Heart left ventricle (tissue), 16 donors: ENCODE measurements at regions of chr1 and their contacts with region 1.

Region 1: GRCh38 chr1:160193091-160193819 is 2.9 kb downstream of the CASQ1 start:
- DNase-seq: peak; percentile 85 to 90 (median 88)
- ATAC-seq: peak; percentile 82 to 90 (median 84)
- H3K4me3 ChIP-seq: no peak overlapping the region
- H3K27ac ChIP-seq: peak overlapping the region in 11 of 12 donors; percentile 34 to 86 (median 72)
- H3K4me1 ChIP-seq: peaks cover 0 to 42% (median 21%) of the 10 kb centered on the region in 12 donors
- H3K27me3 ChIP-seq: no peaks in the 10 kb centered on the region
- CTCF ChIP-seq: peak; percentile 92 to 99 (median 96)
- POLR2A ChIP-seq: no peak

Region 2: DNA sequence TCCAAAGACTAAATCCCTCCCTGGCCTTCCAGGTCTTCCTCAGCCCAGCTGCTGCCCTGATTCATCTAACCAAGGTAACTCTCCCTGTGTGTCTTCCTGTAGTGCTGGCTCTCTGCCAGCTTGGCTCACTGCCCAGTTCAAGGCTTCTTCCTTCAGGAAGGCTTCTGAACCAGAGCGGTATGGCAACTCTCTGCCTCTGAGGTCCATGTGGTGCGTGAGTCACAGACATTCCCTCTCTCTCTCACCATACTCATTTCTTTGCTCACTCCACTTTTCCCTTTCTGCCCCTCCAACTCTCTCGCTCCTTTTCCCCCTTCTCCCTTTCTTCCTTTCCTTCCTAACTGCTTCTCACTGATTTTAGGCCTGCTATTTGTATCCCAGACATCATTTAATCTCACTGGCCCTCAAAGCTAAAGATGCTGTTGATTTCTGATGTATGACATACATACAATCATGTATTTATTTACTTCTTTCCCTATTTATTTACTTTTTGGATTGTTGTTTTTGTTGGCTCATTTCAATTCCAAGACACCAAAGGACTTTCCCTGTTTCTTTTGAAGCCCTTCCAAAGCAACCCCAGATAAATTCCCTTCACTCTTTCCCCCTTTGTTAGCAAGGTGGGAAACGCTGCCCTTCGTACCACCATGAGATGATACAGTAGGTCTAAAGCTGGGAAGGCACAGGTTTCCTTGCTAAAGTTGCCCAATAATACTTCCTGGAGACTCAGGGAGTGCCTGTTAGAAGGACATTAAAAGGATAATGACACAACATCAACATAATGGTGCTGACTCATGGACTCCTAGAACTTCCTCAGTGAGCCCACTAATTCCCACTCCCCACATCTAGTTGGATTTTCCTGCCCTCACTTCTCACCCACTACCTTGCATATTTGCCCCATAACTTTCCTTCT is 311.1 kb before region 1 on chr1:
- intact Hi-C with region 1: no loop called
- DNase-seq: peak in 4 of 5 donors; percentile 44 to 82 (median 56)
- ATAC-seq: peak in 3 of 4 donors; percentile 34 to 60 (median 49)
- H3K4me3 ChIP-seq: no peak overlapping the region
- H3K27ac ChIP-seq: no peak overlapping the region
- H3K4me1 ChIP-seq: peaks cover 0 to 36% (median 0%) of the 10 kb centered on the region in 12 donors
- H3K27me3 ChIP-seq: no peaks in the 10 kb centered on the region
- CTCF ChIP-seq: no peak
- POLR2A ChIP-seq: no peak

Region 3: DNA sequence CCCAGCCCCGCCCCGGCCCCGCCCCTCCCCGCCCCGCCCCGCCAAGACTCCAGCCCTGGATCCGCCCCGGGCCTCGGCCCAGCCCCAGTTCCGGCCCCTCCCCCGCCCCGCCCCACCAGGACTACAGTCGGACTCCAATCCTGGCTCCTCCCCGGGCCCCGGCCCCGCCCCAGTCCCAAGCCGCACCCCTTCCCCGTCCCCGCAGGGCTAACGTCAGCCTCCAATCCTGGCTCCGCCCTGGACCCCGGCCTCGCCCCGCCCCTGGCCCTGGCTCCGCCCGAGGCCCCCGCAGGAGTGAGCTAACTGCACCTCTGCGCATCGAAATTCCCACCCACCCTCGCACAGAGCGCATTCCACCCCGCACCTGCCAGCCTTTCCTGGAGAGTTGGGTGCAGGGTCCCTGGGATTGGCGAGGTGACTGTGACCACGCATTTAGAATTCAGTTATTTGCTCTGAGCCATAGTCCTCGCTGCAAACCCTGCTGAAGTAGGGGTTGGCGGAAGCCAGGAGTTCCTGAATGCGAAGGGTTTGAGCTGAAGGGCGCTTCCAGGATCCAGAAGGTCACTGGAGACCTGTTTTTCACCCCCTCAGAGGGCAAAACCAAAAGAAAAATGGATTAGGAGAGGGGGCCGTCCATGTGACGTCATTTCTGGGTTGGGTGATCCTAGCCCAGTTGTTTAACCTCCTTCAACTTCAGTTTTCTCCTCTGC is 94.2 kb before region 1 on chr1:
- intact Hi-C with region 1: loop called in 6 of 10 experiments (anchors 2 to 10 kb)
- DNase-seq: peak; percentile 97 to 99 (median 98)
- ATAC-seq: peak; percentile 88 to 93 (median 90)
- H3K4me3 ChIP-seq: peak overlapping the region in 11 of 12 donors; percentile 30 to 99 (median 79)
- H3K27ac ChIP-seq: peak overlapping the region; percentile 68 to 96 (median 93)
- H3K4me1 ChIP-seq: peaks cover 7 to 55% (median 35%) of the 10 kb centered on the region in 12 donors
- H3K27me3 ChIP-seq: no peaks in the 10 kb centered on the region
- CTCF ChIP-seq: no peak
- POLR2A ChIP-seq: peak in 1 of 2 donors; percentile 32

Region 4: GRCh38 chr1:160117709-160118183 is 75.5 kb before region 1 on chr1:
- intact Hi-C with region 1: loop called in 1 of 10 experiments (anchors 10 kb)
- DNase-seq: peak in 4 of 5 donors; percentile 41 to 76 (median 67)
- ATAC-seq: peak; percentile 43 to 74 (median 53)
- H3K4me3 ChIP-seq: peak overlapping the region; percentile 37 to 86 (median 62)
- H3K27ac ChIP-seq: peak overlapping the region in 10 of 12 donors; percentile 60 to 96 (median 87)
- H3K4me1 ChIP-seq: peaks cover 0 to 68% (median 38%) of the 10 kb centered on the region in 12 donors
- H3K27me3 ChIP-seq: no peaks in the 10 kb centered on the region
- CTCF ChIP-seq: no peak
- POLR2A ChIP-seq: no peak

Region 5: GRCh38 chr1:160149233-160149632 is 44.0 kb before region 1 on chr1:
- intact Hi-C with region 1: no loop called
- DNase-seq: no peak
- ATAC-seq: no peak
- H3K4me3 ChIP-seq: no peak overlapping the region
- H3K27ac ChIP-seq: peak overlapping the region in 1 of 12 donors; percentile 19
- H3K4me1 ChIP-seq: peaks cover 0 to 7% (median 0%) of the 10 kb centered on the region in 12 donors
- H3K27me3 ChIP-seq: no peaks in the 10 kb centered on the region
- CTCF ChIP-seq: no peak
- POLR2A ChIP-seq: no peak

Region 6: DNA sequence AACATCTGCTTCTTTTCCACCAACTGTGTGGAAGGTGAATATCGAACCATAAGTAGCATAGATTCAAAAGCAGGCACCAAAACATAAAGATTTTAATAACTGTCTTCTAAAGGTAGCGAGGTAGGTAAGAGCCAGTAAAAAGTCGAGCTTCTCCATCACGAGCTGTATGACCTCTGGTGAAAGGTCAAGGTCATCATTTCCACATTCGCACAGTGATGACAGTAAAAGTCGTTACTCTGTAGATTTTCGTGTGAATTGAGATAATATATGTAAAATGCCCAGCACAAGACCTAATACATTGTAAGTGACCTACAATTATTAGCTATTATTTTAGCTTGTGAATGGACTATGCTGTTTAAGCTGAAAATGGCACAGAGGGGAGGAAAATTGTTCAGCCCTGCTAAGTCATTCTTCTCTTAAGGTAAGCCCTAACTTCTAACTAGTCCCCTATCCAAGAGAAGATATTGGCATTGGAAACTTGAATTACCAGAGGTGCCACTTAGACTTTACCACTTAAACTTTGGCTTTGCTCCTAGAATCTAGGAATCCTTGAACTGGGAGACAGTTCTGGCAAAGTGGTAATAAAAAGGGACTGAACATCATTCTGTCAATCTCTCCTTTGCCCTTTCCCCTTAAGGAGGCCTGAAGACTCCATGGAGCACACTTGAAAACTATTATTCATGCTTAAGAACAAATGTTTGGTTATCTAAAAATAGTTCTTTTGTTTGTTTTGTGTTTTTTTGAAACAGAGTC is 33.6 kb before region 1 on chr1:
- intact Hi-C with region 1: no loop called
- DNase-seq: no peak
- ATAC-seq: peak in 2 of 4 donors; percentile 15 to 50
- H3K4me3 ChIP-seq: no peak overlapping the region
- H3K27ac ChIP-seq: peak overlapping the region in 2 of 12 donors; percentile 9 to 35
- H3K4me1 ChIP-seq: peaks cover 0 to 7% (median 0%) of the 10 kb centered on the region in 12 donors
- H3K27me3 ChIP-seq: no peaks in the 10 kb centered on the region
- CTCF ChIP-seq: no peak
- POLR2A ChIP-seq: no peak

Region 7: DNA sequence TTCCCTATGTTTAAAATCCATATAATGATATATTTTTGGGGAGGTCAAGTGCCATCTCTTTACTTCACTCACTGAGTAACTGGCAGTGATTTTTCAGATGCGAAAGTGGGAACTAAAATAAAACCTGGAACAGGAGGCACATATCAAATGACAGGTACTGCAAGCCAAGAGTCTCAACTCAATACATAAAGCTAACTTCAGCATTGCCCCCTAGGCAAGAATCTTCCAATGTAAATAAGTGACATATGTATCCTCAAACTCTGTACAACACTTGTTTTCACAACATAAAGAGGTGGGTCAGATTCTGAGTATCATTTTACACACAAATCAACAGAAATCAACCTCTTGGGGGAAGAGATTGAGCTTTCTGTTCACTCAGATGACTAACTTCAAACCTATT is 51.0 kb after region 1 on chr1:
- intact Hi-C with region 1: loop called in 2 of 10 experiments (anchors 10 kb)
- DNase-seq: no peak
- ATAC-seq: peak in 1 of 4 donors; percentile 13
- H3K4me3 ChIP-seq: no peak overlapping the region
- H3K27ac ChIP-seq: peak overlapping the region in 10 of 12 donors; percentile 9 to 60 (median 28)
- H3K4me1 ChIP-seq: peaks cover 7 to 53% (median 37%) of the 10 kb centered on the region in 12 donors
- H3K27me3 ChIP-seq: no peaks in the 10 kb centered on the region
- CTCF ChIP-seq: no peak
- POLR2A ChIP-seq: no peak

Region 8: DNA sequence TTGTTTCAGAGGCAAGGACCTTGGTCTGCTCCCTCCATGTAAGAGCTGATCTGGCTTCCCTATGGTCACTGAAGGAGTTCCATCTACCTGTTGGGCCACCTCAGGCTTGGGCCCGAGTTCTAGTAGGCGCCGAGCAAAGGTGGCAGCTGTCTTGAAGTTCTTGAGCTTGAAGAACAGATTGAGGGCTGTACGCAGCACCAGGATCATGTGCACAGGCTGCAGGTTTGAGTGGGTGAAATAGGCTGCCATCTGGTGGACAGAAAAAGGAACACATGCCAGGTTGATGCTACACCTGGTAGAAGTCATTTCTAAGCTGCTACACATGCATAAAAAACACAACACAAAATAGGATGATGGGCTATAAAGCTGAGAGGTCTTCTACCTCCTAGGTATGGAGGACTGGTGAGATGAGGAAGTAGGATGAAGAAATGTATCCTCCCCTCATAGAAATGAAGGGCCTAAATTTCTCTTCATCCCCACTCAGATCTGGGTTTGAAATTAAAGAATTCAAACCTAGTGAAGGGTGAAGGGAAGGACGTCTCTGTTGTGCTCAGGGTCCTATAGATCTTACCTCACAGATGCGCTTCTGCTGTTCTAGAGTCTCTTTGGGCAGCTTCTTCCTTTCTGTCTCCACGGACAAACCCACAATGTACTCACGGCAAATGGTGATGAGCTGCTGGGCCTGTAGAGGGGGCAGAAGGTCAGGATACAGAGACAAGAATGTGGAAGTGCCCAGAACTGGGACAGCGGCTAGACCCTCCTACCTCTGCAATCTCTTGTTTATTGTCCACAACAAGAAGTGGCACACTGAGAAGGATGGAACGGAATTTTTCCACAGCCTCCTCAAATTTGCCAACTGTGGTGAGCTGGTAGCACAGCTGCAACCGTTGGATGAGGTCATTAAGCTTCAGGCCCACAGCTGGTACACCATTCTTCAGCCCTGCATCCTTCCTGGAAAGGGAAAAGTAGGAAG is 98.3 kb after region 1 on chr1:
- intact Hi-C with region 1: loop called in 9 of 10 experiments (anchors 1 to 5 kb)
- DNase-seq: peak in 4 of 5 donors; percentile 44 to 60 (median 53)
- ATAC-seq: peak; percentile 73 to 90 (median 82)
- H3K4me3 ChIP-seq: no peak overlapping the region
- H3K27ac ChIP-seq: peak overlapping the region in 1 of 12 donors; percentile 32
- H3K4me1 ChIP-seq: peaks cover 0 to 5% (median 0%) of the 10 kb centered on the region in 12 donors
- H3K27me3 ChIP-seq: no peaks in the 10 kb centered on the region
- CTCF ChIP-seq: peak; percentile 62 to 86 (median 78)
- POLR2A ChIP-seq: no peak